CD14-positive monocyte (primary cell): ENCODE measurements at regions of chr13 and their contacts with region 1.

Region 1: DNA sequence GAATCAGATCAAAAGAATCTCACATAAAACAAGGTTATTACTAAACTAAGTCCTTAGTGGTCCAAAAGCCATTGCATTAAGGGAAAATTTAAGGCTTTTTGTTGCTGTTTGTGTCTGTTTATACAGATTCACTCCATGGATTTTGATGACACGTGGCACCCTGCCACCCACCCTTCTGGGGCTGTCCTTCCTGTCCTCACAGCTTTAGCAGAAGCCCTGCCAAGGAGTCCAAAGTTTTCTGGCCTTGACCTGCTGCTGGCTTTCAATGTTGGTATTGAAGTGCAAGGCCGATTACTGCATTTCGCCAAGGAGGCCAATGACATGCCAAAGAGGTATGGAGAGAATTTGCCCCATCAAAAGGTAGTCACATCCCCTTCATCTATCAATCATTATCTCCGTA is 6.9 kb downstream of the ACOD1 start:
- DNase-seq: no peak
- H3K4me3 ChIP-seq: no peak overlapping the region
- H3K4me3 Mint-ChIP-seq: no peak overlapping the region
- H3K27ac ChIP-seq: no peak overlapping the region
- H3K27ac Mint-ChIP-seq: no peak overlapping the region
- H3K4me1 ChIP-seq: peaks cover under 1 to 8% of the 10 kb centered on the region in 2 donors
- H3K4me1 Mint-ChIP-seq: peaks cover 9% of the 10 kb centered on the region
- H3K27me3 ChIP-seq: no peaks in the 10 kb centered on the region
- H3K27me3 Mint-ChIP-seq: peaks cover 2 to 10% (median 6%) of the 10 kb centered on the region in 3 donors
- CTCF ChIP-seq: no peak

Region 2: GRCh38 chr13:76921516-76921915 is 33.7 kb before region 1 on chr13:
- intact Hi-C with region 1: loop called in 1 of 2 experiments (anchors 5 kb)
- DNase-seq: no peak
- H3K4me3 ChIP-seq: no peak overlapping the region
- H3K4me3 Mint-ChIP-seq: no peak overlapping the region
- H3K27ac ChIP-seq: no peak overlapping the region
- H3K27ac Mint-ChIP-seq: no peak overlapping the region
- H3K4me1 ChIP-seq: no peaks in the 10 kb centered on the region
- H3K4me1 Mint-ChIP-seq: peaks cover 4% of the 10 kb centered on the region
- H3K27me3 ChIP-seq: no peaks in the 10 kb centered on the region
- H3K27me3 Mint-ChIP-seq: no peaks in the 10 kb centered on the region
- CTCF ChIP-seq: no peak

Region 3: DNA sequence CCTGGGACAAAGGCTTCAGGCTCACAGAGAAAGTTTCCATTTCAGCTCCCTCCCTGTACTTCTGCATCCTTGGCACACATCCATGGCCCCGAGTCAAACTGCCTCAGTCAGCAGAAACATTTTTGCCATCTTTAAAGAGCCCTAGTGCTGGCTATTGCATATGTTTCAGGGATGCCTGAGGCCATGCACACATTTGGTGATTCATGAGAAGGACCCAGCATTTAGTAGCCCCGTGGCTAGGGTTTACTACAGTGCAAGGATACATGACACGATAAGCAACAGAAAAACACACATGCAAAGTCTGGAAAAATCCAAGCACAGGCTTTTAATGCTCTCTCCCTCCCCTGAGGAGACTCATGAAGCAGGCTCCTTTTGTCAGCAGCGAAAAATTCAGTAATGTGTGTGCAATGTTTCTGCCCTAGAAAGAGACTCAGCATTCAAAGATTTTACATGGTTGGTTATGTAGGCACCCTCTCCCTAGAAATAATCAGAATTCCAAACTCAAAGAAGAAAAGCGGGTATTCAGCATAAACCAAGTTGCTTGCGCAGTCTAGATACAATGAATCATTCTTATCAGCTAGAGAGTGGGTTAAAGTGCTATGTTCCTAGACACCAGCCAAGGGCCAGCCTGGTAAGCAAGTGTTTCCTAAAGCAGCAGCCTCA is 10.7 kb after region 1 on chr13:
- intact Hi-C with region 1: no loop called
- DNase-seq: no peak
- H3K4me3 ChIP-seq: no peak overlapping the region
- H3K4me3 Mint-ChIP-seq: no peak overlapping the region
- H3K27ac ChIP-seq: no peak overlapping the region
- H3K27ac Mint-ChIP-seq: peak overlapping the region in 1 of 7 donors; percentile 11
- H3K4me1 ChIP-seq: no peaks in the 10 kb centered on the region
- H3K4me1 Mint-ChIP-seq: no peaks in the 10 kb centered on the region
- H3K27me3 ChIP-seq: peaks cover 0 to 2% of the 10 kb centered on the region in 2 donors
- H3K27me3 Mint-ChIP-seq: peaks cover 0 to 5% (median 3%) of the 10 kb centered on the region in 3 donors
- CTCF ChIP-seq: no peak

Region 4: GRCh38 chr13:77002590-77003190 is 47.5 kb after region 1 on chr13:
- intact Hi-C with region 1: no loop called
- DNase-seq: peak in 1 of 3 donors; percentile 16
- H3K4me3 ChIP-seq: no peak overlapping the region
- H3K4me3 Mint-ChIP-seq: no peak overlapping the region
- H3K27ac ChIP-seq: no peak overlapping the region
- H3K27ac Mint-ChIP-seq: peak overlapping the region in 1 of 7 donors; percentile 12
- H3K4me1 ChIP-seq: no peaks in the 10 kb centered on the region
- H3K4me1 Mint-ChIP-seq: peaks cover 2% of the 10 kb centered on the region
- H3K27me3 ChIP-seq: no peaks in the 10 kb centered on the region
- H3K27me3 Mint-ChIP-seq: no peaks in the 10 kb centered on the region
- CTCF ChIP-seq: peak; percentile 66

Region 5: GRCh38 chr13:77048681-77049080 is 93.5 kb after region 1 on chr13:
- intact Hi-C with region 1: no loop called
- DNase-seq: peak; percentile 26 to 41 (median 26)
- H3K4me3 ChIP-seq: peak overlapping the region in 1 of 3 experiments; percentile 29
- H3K4me3 Mint-ChIP-seq: peak overlapping the region in 1 of 2 donors; percentile 52
- H3K27ac ChIP-seq: peak overlapping the region; percentile 19 to 76
- H3K27ac Mint-ChIP-seq: peak overlapping the region; percentile 64 to 92 (median 83)
- H3K4me1 ChIP-seq: peaks cover 17 to 22% of the 10 kb centered on the region in 2 donors
- H3K4me1 Mint-ChIP-seq: peaks cover 18% of the 10 kb centered on the region
- H3K27me3 ChIP-seq: no peaks in the 10 kb centered on the region
- H3K27me3 Mint-ChIP-seq: no peaks in the 10 kb centered on the region
- CTCF ChIP-seq: no peak